BJ (cell line): ENCODE measurements at regions of chr11 and their contacts with region 1.

Region 1: DNA sequence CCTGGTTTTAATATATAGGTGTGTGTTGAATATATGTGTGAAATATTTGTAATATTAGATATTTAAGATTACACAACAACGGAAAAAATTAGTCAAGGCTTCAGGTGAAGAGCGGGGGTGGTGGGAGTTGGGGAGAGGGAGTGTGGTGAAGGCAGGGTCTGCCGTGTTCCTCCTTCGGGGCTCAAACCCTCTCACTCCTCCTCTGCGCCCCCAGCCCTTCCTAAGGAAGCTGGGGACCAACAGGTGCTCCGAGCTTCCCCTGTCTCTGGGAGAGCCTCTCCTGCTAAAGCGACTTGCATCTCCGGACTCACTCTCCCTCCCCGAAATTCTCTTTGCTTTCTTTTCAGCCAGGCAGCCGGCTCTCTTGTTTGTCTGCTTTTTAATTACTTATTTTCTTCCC is 960 bp upstream of the CADM1 start:
- DNase-seq: no peak
- H3K4me3 ChIP-seq: no peak overlapping the region; the same call in 1 of the 2 replicates
- H3K27me3 ChIP-seq: peaks cover 22% of the 10 kb centered on the region
- CTCF ChIP-seq: no peak

Region 2: GRCh38 chr11:115452244-115452643 is 52.9 kb before region 1 on chr11:
- CTCF ChIA-PET with region 1: no interaction called
- POLR2A ChIA-PET with region 1: interaction called, 11 read pairs
- DNase-seq: no peak
- H3K4me3 ChIP-seq: no peak overlapping the region
- H3K27me3 ChIP-seq: no peaks in the 10 kb centered on the region
- CTCF ChIP-seq: no peak